AG04450 (cell line): ENCODE measurements at regions of chr12 and their contacts with region 1.

Region 1: DNA sequence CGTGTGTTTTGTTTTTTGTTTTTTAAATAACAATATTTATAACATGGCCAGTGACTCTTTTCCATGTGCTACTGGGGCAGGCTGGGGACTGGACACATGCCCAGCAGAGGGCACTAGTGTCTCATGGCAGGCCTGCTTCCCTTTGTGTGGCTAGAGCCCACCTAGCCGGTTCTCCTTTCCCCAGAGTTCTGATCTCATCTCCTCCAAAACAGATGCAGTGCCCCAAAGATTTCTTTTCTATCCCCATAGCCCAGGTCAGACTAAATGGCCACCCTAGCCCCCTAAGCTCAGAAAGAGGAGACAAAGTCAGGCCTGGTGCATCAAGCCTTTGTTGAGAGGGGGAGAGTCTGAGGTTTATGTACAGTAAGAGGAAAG is 21.2 kb downstream of the PRPF40B start:
- DNase-seq: peak; percentile 54
- H3K4me3 ChIP-seq: no peak overlapping the region
- H3K27ac ChIP-seq: no peak overlapping the region
- H3K27me3 ChIP-seq: no peaks in the 10 kb centered on the region
- CTCF ChIP-seq: peak; percentile 99

Region 2: DNA sequence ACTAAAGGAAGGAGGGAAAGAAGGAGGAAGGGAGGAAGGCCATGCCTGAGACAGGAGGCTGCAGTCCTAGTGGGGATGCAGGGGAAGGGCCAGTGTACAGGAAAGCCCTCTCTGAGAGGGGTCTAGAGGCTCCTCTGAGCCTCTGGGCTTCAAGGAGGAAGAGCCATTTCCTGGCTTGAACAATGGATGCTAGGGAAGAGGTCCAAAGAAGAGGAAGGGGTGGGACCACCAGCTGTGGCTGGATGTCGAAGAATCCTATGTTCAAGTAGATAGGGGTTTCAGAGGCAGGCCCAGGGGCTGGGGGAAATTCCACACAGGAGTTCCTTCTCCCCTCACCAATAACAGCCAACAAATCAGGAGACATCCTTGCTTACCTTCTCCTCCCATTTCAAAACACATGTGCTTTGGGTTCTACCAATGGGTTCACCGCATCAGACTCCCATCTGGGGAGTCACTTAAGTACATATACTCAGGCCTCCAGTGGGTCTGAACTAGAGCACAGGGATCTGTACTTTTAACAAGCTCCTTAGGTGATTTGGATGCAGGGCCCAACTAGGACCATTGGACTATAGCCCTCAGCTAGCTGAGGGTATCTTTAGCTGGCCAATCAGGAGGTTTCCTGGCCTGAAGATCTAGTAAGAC is 11.1 kb after region 1 on chr12:
- CTCF ChIA-PET with region 1: interaction called, 11 read pairs
- POLR2A ChIA-PET with region 1: no interaction called
- DNase-seq: no peak
- H3K4me3 ChIP-seq: no peak overlapping the region
- H3K27ac ChIP-seq: no peak overlapping the region
- H3K27me3 ChIP-seq: no peaks in the 10 kb centered on the region
- CTCF ChIP-seq: no peak

Region 3: GRCh38 chr12:49697808-49698207 is 53.2 kb after region 1 on chr12:
- CTCF ChIA-PET with region 1: interaction called, 64 read pairs
- POLR2A ChIA-PET with region 1: no interaction called
- DNase-seq: no peak
- H3K4me3 ChIP-seq: no peak overlapping the region
- H3K27ac ChIP-seq: no peak overlapping the region
- H3K27me3 ChIP-seq: no peaks in the 10 kb centered on the region
- CTCF ChIP-seq: no peak

Region 4: GRCh38 chr12:49728446-49728845 is 83.8 kb after region 1 on chr12:
- CTCF ChIA-PET with region 1: no interaction called
- POLR2A ChIA-PET with region 1: no interaction called
- DNase-seq: no peak
- H3K4me3 ChIP-seq: no peak overlapping the region
- H3K27ac ChIP-seq: no peak overlapping the region
- H3K27me3 ChIP-seq: peaks cover 16% of the 10 kb centered on the region
- CTCF ChIP-seq: no peak